Panc1 (cell line): ENCODE measurements at regions of chr4 and their contacts with region 1.

Region 1: GRCh38 chr4:1708584-1708983 is 3.5 kb downstream of the SLBP start:
- DNase-seq: no peak
- ATAC-seq: no peak
- H3K4me3 ChIP-seq: no peak overlapping the region
- H3K27ac ChIP-seq: 0 out of 2 replicates have a peak overlapping the region, but pooled peaks have one; percentile 29
- H3K4me1 ChIP-seq: peaks cover 23% of the 10 kb centered on the region
- H3K27me3 ChIP-seq: no peaks in the 10 kb centered on the region
- CTCF ChIP-seq: no peak

Region 2: DNA sequence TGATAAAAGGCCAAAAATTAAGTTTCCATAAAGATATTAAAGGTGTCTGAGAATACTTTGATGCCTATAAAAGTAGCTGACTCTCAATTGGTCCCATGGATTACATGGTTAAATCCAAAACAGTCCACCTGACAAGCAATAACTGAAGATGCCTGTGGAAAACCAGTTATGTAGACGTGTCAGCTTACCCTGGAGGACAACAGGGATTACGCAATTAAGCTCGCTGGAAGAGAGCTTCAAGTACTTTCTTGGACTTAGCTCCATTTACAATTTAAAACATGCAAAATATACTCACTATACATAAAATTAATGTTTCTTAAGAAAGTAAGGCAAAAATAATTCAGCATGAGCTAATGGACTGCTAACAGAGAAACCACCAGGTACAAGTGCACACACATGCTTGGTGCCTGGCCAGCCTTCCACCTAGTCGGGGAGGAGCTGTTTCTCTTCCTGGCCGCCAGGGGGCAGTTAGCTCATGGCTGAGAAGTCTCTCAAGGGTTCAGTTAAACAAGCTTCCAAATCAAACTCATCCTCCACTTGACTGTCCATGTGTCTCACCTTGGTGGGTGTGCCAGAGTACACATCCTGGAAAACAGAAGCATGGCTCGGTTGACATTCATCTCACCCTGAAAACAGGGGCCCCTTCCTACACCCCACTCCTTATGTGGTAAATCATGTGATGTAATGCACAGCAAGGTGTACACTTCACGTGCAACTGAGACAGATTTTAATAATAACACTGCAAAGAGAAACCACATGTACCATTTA is 15.3 kb before region 1 on chr4:
- CTCF ChIA-PET with region 1: interaction called, 11 read pairs
- POLR2A ChIA-PET with region 1: no interaction called
- in situ Hi-C with region 1: no loop called
- intact Hi-C with region 1: no loop called
- DNase-seq: peak; percentile 64
- ATAC-seq: peak; percentile 91
- H3K4me3 ChIP-seq: no peak overlapping the region
- H3K27ac ChIP-seq: peak overlapping the region; percentile 51; the same call in 1 of the 2 replicates
- H3K4me1 ChIP-seq: no peaks in the 10 kb centered on the region
- H3K27me3 ChIP-seq: no peaks in the 10 kb centered on the region
- CTCF ChIP-seq: peak; percentile 92

Region 3: DNA sequence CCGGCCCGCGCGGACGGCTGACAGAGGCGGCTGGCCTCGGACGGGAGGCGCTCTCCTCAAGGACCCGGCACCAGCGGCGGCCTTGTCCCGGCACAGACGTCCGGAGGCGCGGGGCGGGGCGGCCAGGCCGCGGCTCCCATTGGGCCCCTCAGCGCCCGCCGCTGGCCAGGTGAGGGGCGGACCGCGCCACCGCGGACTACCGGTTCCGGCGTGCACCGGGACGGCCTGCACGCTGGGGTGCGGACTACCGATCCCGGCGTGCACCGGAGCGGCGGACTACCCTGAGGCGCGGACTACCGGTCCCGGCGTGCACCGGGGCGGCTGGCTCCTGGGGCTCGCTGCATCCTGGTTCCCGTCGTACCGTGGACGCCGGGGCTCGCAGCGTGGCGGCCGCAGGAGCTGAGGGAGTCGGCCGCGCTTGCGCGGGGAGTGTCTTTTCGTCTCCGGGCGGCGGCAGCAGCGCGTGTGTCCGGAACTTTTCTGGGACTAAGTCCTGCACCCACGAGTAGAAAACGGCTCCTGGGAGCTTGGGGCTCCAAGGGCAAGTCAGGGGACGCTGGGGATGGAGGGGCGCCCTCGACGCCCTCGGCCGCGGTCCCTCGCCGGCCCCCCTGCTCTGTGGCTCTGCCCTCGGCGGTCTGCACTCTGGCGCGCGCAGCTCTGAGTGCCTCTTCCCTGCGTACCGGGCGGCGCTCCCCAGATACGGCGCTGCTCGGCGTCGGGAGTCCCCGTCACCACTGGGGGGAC is 147.6 kb after region 1 on chr4 and contains the start of gene LETM1:
- CTCF ChIA-PET with region 1: no interaction called
- POLR2A ChIA-PET with region 1: no interaction called
- in situ Hi-C with region 1: no loop called
- intact Hi-C with region 1: no loop called
- DNase-seq: no peak
- ATAC-seq: peak; percentile 96
- H3K4me3 ChIP-seq: peak within 1 kb of the TSS; percentile 75 to 78
- H3K27ac ChIP-seq: peak within 1 kb of the TSS; percentile 83
- H3K4me1 ChIP-seq: peaks cover 15% of the 10 kb centered on the region
- H3K27me3 ChIP-seq: no peaks in the 10 kb centered on the region
- CTCF ChIP-seq: no peak
- total RNA-seq, gene LETM1: 67.6 TPM